Calu3 (cell line): ENCODE measurements at regions of chr2 and their contacts with region 1.

Region 1: GRCh38 chr2:25606892-25607291 is 66.5 kb downstream of the DTNB start:
- DNase-seq: no peak
- H3K4me3 Mint-ChIP-seq: no peak overlapping the region
- H3K27ac Mint-ChIP-seq: no peak overlapping the region
- H3K4me1 Mint-ChIP-seq: no peaks in the 10 kb centered on the region
- H3K27me3 Mint-ChIP-seq: no peaks in the 10 kb centered on the region
- CTCF ChIP-seq: peak; percentile 56

Region 2: GRCh38 chr2:25618642-25619037 is 11.7 kb after region 1 on chr2:
- CTCF ChIA-PET with region 1: interaction called, 27 read pairs
- intact Hi-C with region 1: no loop called
- DNase-seq: peak; percentile 17
- H3K4me3 Mint-ChIP-seq: peak overlapping the region; percentile 33
- H3K27ac Mint-ChIP-seq: peak overlapping the region; percentile 57
- H3K4me1 Mint-ChIP-seq: peaks cover 51% of the 10 kb centered on the region
- H3K27me3 Mint-ChIP-seq: no peaks in the 10 kb centered on the region
- CTCF ChIP-seq: no peak